ENCODE measurements at regions of chrX and their contacts with region 1.

Region 1: DNA sequence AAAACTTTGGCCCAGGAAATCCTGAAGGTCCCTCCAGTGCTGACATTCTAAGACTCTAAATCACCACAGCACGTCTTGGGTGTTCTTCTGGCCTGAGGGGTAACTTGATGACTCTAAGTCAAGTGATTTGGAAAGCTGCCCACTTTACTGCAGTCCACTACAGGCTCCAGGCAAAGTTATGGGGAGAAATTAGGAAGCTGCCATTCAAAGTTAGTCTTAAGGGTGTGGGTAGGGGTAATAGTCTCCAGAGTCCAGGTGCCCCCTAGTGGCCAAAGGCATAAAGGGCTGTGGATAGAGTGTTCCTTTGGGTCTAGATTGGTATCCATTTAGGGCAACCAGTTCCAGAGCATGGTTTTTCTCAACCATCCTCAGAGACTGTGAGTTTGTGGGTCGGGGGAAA is 38.7 kb upstream of the SLC16A2 start:
- DNase-seq: peak; percentile 76
- H3K4me3 ChIP-seq: no peak overlapping the region
- H3K27ac ChIP-seq: no peak overlapping the region
- H3K4me1 ChIP-seq: no peaks in the 10 kb centered on the region
- H3K27me3 ChIP-seq: no peaks in the 10 kb centered on the region
- CTCF ChIP-seq: peak in 2 of 3 experiments; percentile 59 to 63
- POLR2A ChIP-seq: no peak

Region 2: GRCh38 chrX:74431797-74432196 is 49.2 kb after region 1 on chrX:
- intact Hi-C with region 1: no loop called
- DNase-seq: no peak
- H3K4me3 ChIP-seq: no peak overlapping the region
- H3K27ac ChIP-seq: no peak overlapping the region
- H3K4me1 ChIP-seq: no peaks in the 10 kb centered on the region
- H3K27me3 ChIP-seq: no peaks in the 10 kb centered on the region
- CTCF ChIP-seq: no peak
- POLR2A ChIP-seq: no peak

Region 3: DNA sequence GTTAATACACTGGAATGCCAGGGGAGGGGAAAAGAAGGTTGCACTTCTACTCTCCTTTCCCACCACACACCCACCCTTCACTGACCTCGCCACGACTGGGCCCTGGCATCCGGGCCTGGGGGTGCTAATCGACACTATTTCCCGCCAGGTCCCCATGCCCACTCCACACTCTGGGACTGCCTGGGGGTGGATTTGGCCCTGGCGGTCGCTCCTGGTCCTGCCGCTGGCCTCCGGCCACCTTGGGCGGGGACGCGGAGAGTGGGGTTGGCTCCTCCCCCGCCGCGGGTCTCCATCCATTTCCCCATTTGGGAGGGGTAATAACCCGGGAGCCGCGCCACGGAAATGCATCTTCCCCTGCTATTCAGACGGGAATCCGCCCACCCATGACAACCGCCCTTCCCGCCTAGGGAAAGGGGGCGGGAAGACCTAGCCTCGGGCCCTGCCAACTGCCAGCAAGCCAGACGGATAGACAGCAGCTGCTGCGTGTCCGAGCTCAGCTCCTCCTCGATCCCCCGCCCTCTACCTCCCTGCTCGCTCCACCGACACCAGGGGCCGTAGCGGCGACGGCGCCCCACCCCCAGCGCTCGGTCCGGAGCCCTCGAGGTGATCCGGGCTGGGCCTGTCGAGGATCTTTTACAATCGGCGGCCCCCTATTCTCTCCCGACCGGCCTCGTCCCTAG is 153.7 kb after region 1 on chrX:
- intact Hi-C with region 1: loop called (anchors 10 kb)
- DNase-seq: peak; percentile 79
- H3K4me3 ChIP-seq: peak overlapping the region; percentile 32 to 56
- H3K27ac ChIP-seq: peak overlapping the region; percentile 70 to 84
- H3K4me1 ChIP-seq: no peaks in the 10 kb centered on the region
- H3K27me3 ChIP-seq: no peaks in the 10 kb centered on the region
- CTCF ChIP-seq: peak in 2 of 3 experiments; percentile 5 to 11
- POLR2A ChIP-seq: no peak

Measured in testis (tissue), 5 donors.